ENCODE measurements at regions of chr20 and their contacts with region 1.

Region 1: DNA sequence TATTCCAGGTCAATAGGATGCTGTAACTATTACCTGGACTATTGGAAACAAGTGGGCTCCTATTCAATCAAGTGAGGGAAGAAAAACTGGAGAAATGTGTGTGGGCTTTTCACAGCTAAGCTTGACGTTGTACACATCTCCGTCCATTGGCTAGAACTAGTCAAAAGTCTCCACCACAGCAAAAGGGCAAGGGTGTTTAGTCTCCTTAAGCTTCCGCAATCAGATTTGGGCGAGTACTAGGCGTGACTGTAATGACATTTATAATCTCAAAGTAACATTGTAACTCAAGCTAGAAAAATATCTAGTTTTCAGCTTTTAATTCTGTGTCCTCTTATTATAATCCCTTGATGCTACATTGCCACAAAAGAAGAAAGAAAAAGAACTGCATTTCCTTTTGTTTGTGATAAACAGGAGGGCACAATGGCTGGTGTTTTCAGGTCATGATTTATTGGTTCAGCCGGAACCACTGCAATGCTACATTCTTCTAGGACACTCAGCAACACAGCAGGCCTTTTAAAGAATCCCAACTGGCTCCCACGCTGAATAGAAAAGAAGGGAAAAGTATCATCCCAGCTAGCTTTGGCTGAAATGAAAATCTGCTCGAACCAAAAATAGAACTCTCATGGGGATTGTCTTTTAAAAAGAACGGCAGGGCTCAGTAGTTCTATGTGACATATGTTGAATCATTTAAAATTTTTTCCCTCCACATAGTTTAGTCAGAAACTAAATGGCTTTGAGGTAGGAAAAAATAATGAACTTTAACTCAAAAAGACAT is 387.7 kb downstream of the BTBD3 start:
- DNase-seq: no peak
- ATAC-seq: no peak
- H3K4me3 ChIP-seq: no peak overlapping the region
- H3K27ac ChIP-seq: no peak overlapping the region
- H3K4me1 ChIP-seq: no peaks in the 10 kb centered on the region
- H3K27me3 ChIP-seq: no peaks in the 10 kb centered on the region
- CTCF ChIP-seq: no peak
- EP300 ChIP-seq: no peak
- POLR2A ChIP-seq: no peak
- RAD21 ChIP-seq: no peak

Region 2: DNA sequence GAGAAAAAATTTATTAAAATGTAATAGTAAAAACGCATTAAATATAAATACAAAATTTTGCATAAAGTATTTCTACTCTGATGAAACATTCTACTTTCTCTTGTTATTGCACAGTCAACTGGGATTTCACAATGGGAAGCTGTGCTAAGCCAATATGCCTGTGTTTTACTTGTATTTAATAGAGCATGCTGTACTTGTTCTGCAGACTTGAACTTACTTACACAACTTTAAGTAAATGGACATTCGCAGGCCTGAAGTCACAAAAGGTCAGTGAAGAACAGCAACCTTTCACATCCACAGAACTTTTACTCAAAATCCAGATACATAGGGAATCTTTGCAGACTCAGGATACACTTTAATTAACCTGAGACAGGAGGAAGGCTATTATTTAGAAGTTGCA is 21.8 kb after region 1 on chr20:
- CTCF ChIA-PET with region 1: no interaction called
- POLR2A ChIA-PET with region 1: no interaction called
- in situ Hi-C with region 1: no loop called
- intact Hi-C with region 1: no loop called
- DNase-seq: no peak
- ATAC-seq: no peak
- H3K4me3 ChIP-seq: no peak overlapping the region
- H3K27ac ChIP-seq: no peak overlapping the region
- H3K4me1 ChIP-seq: no peaks in the 10 kb centered on the region
- H3K27me3 ChIP-seq: no peaks in the 10 kb centered on the region
- CTCF ChIP-seq: no peak
- EP300 ChIP-seq: no peak
- POLR2A ChIP-seq: no peak
- RAD21 ChIP-seq: no peak

Region 3: GRCh38 chr20:12860619-12861247 is 555.4 kb after region 1 on chr20:
- CTCF ChIA-PET with region 1: no interaction called
- POLR2A ChIA-PET with region 1: no interaction called
- in situ Hi-C with region 1: loop called (anchors 10 kb)
- intact Hi-C with region 1: no loop called
- DNase-seq: no peak
- ATAC-seq: no peak
- H3K4me3 ChIP-seq: no peak overlapping the region
- H3K27ac ChIP-seq: no peak overlapping the region
- H3K4me1 ChIP-seq: no peaks in the 10 kb centered on the region
- H3K27me3 ChIP-seq: no peaks in the 10 kb centered on the region
- CTCF ChIP-seq: no peak
- EP300 ChIP-seq: no peak
- POLR2A ChIP-seq: no peak
- RAD21 ChIP-seq: no peak